Activated CD4-positive, alpha-beta memory T cell treated with anti-CD3 and anti-CD28 coated beads, Interleukin-2, amount 10 ng/mL, durations not matched to agents 7 days and 5 days (primary cell): ENCODE measurements at regions of chr1 and their contacts with region 1.

Region 1: GRCh38 chr1:206551986-206552326 is 44.6 kb downstream of the RASSF5 start:
- DNase-seq: peak; percentile 88
- H3K4me3 Mint-ChIP-seq: peak overlapping the region; percentile 57
- H3K27ac Mint-ChIP-seq: peak overlapping the region; percentile 86
- H3K4me1 Mint-ChIP-seq: peaks cover 62% of the 10 kb centered on the region
- H3K27me3 Mint-ChIP-seq: no peaks in the 10 kb centered on the region

Region 2: DNA sequence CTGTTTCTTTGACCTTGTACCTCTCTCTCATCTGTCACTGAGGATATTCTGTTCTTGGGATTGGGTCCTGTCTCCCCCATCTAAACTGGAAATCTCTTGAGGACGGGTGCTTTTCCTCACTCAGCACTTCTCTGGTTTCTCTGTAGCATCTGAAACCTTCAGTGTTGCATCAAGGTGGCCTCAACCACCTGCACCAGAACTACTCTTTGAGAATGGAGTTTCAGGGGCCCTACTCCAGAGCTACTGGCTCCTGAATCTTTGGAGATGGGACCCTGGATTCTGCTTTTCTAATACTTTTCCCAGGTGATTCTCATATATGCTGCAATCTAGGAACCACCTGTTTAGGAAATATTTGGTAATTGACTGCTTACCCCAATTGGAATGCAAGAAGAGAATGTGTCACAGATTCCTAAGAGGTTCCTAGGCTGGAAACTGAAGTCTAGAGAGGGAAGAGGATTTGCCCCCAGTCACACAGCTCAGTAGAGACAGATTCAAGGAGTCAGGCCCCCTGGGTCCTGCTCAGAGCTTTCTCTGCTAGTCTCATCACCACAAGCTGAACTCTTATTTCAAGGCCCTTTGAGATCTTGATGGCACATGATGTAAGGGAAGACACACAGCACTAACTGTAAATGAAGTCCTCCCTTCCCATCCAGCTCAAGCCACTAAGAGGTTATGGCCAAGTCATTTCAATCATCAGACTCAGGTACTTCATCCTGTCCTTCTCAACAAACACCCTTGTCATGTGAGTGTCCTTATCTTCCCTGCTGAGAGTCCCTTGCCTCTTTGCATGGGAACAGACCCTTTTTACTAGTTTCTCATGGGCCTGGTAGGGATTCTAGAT is 11.6 kb after region 1 on chr1:
- CTCF ChIA-PET with region 1: interaction called, 119 read pairs
- POLR2A ChIA-PET with region 1: interaction called, 1,193 read pairs
- DNase-seq: no peak
- H3K4me3 Mint-ChIP-seq: peak overlapping the region; percentile 72
- H3K27ac Mint-ChIP-seq: peak overlapping the region; percentile 88
- H3K4me1 Mint-ChIP-seq: peaks cover 89% of the 10 kb centered on the region
- H3K27me3 Mint-ChIP-seq: no peaks in the 10 kb centered on the region